ENCODE measurements at regions of chr11 and their contacts with region 1.

Region 1: GRCh38 chr11:17839973-17840611 is 105.5 kb downstream of the KCNC1 start:
- DNase-seq: no peak
- H3K4me3 ChIP-seq: no peak overlapping the region
- H3K27me3 ChIP-seq: no peaks in the 10 kb centered on the region
- CTCF ChIP-seq: no peak

Region 2: DNA sequence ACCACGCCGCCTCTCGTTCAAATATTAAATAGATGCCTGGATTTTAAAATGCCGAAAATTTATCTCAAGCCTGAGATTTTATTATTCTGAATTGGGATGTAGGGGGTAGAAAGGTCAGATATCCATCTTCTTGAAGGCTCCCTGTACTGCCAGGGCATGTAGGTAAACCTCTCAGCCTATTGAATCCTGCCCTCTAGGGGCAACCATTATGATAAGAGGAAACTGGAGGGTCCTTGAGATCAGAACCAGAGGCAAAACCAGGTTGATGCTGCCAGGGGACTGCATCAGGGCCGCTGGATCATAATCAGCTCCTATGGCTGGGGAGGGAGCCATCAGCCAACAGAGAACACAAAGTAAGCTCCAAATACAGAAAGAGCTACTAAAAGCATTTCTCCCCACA is 13.1 kb before region 1 on chr11:
- CTCF ChIA-PET with region 1: interaction called, 15 read pairs
- POLR2A ChIA-PET with region 1: no interaction called
- DNase-seq: no peak
- H3K4me3 ChIP-seq: no peak overlapping the region
- H3K27me3 ChIP-seq: no peaks in the 10 kb centered on the region
- CTCF ChIP-seq: peak; percentile 13; the same call in 1 of the 2 replicates

Measured in BJ (cell line).